ENCODE measurements at regions of chr5 and their contacts with region 1.

Region 1: GRCh38 chr5:152142840-152143469 is 218.3 kb upstream of the GLRA1 start:
- DNase-seq: peak; percentile 66
- ATAC-seq: peak; percentile 83

Region 2: GRCh38 chr5:151619796-151620460 is 523.0 kb before region 1 on chr5:
- intact Hi-C with region 1: no loop called
- DNase-seq: no peak
- ATAC-seq: no peak

Region 3: DNA sequence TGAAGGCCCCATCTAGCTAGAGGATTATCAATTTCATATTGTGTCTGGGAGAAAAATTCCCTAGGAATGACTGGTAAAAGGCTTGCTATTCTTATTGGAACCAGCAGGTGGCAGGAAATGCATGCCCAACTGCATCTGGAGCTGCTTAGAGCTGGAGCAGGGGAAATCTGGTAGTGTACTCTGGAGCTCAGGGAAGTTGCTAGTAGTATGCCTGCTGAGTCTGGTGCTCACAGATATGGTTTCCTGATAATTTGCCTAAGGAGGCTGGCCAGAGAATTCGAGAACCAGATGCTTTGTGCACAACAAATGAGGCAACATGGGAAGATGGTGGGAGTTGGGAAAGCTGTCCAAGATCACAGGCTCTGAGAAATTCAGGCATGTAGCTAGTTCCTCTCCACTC is 317.5 kb before region 1 on chr5:
- intact Hi-C with region 1: loop called (anchors 2 kb)
- DNase-seq: no peak
- ATAC-seq: peak; percentile 87

Region 4: GRCh38 chr5:151896031-151896691 is 246.8 kb before region 1 on chr5:
- intact Hi-C with region 1: no loop called
- DNase-seq: no peak
- ATAC-seq: no peak

Region 5: DNA sequence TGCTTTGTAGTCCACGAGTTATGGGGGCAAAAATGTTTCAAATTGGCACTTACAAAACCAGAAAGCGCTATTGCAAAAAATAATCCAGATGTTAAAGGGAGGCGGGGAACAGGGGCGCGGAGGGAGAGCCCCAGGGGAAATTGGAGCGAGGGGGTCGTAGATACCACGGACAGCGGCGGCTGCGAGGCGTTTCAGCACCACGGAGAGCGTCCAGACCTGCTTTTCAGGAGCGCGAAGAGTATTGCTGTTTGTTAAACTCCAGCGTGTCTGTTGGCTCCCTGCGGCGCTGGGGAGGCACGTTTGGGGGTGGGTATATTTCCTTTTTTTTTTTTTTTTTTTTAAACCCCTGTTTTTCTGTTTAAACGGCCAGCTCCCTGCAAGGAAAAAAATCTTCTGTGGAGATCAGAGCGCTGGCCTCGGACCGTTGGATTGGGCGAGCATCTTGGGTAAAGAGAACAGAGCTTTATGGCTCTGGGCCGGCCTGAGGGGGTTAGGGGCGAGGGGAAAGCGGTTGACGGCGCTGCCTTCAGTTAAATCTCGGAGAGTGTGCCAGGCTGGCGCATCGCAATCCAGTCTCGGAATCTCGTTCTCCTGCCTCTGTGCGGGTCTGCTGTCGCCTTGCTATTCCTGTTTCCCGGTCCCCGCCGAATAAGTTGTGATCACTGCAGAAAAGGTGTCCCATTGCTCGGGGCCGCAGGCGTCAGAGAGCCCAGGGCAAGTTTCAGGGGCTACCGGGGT is 218.2 kb before region 1 on chr5 and contains the start of gene GLRA1:
- intact Hi-C with region 1: no loop called
- DNase-seq: peak; percentile 67
- ATAC-seq: peak; percentile 60
- total RNA-seq, gene GLRA1: not detected

Region 6: DNA sequence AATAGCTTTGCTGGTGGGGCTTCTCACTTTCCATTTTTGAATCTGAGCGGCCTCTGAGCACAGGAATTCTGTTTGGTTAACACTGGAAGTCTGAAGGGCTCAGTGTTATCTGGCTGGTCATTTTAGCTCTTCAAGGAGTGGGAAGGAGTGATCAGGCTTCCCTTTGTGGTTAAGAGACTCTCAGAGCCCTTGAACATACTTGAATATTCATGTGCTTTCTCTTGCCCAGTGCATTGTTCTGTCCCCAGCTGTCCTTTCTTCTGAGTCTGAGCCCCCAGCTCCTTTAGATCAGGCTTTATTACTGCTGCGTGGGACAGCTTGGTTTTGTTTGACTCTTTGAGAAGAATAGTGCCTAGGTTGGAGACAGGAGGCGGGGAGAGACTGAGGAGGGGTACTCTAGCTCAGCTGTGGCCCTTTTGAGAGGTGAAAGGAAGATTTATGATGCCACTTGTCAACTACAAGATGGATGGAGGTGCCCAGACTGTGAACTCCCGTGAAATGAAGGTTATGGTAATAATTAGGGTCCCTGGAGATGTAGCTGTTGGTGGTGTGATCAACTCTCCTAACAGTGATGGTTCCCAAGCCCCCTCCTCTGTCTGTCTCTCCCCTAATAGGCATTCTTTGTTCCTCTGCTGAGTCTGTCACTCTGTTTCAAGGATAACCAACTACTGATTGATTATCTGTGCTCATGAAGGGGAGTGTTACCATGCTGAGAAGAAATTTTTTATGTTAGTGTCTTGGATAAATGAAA is 135.2 kb before region 1 on chr5:
- intact Hi-C with region 1: no loop called
- DNase-seq: no peak
- ATAC-seq: no peak

Region 7: DNA sequence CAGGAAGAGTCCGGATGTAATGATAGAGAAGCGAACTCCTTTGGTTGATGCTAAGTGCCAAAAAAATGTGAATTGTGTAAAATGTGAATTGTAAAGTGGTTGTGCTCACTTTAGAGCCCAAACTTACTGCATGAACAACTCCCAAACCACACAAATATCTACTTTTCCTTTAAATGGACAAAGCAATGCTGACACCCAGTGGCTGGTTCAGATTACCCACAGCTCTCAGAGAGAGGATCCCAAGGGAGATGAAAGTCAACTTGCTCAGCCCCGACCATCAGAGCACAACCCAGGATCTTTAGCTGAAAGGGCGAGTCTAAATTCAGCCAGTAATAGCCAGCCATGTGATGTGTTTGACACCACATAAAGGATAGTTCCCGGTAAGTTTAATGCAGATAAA is 128.5 kb after region 1 on chr5:
- intact Hi-C with region 1: loop called (anchors 10 kb)
- DNase-seq: no peak
- ATAC-seq: peak; percentile 84

Region 8: GRCh38 chr5:152505442-152506042 is 362.6 kb after region 1 on chr5:
- intact Hi-C with region 1: loop called (anchors 10 kb)
- DNase-seq: no peak
- ATAC-seq: peak; percentile 93

Measured in Right ventricle myocardium superior (tissue), 1 donor.